ENCODE measurements at regions of chr1 and their contacts with region 1.

Region 1: DNA sequence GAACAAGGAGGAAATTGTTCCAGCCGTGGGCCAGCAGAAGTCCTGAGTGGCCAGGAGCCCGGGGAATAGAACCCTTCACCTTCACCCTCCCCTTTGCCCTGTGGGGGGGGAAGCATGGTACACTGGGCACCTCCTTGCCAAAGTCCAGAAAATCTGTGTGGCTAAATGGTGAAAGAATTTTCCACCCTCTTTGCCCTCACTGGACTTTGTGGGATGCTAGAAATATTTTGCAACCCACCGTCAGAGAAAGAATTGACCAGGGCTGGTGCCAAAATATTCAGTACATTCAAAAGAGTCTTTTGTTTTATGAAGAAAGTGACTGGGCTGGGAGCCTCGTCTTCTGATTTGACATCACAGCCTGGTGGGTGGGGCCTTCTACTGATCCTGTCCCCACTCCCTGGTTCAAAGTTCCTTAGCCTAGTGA is 14.6 kb downstream of the NFASC start:
- DNase-seq: no peak
- H3K4me3 ChIP-seq: peak overlapping the region in 1 of 2 donors; percentile 3
- H3K27ac ChIP-seq: peak overlapping the region; percentile 50
- H3K4me1 ChIP-seq: peaks cover 49% of the 10 kb centered on the region
- H3K27me3 ChIP-seq: no peaks in the 10 kb centered on the region
- CTCF ChIP-seq: no peak
- POLR2A ChIP-seq: no peak

Region 2: DNA sequence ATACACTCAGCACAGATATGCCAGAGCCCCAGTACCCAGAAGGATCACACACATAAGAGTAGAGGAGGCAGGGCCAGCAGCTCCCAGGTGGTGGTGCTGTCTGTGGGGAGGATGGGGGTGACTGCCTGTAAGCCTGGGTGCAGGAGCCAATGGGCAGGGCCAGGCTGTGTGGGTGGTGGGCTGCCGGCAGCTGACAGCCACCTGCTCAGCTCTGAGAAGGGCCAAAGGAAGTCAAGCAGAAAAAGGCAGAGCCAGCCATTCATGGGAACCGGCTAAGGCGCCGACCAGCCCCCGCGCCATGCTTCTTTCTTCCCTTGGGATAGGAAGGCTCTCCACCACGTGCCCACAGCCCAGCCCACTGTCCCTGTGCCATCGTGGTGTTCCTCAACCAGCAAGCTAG is 404.8 kb before region 1 on chr1:
- intact Hi-C with region 1: no loop called
- DNase-seq: no peak
- H3K4me3 ChIP-seq: no peak overlapping the region
- H3K27ac ChIP-seq: no peak overlapping the region
- H3K4me1 ChIP-seq: peaks cover 82% of the 10 kb centered on the region
- H3K27me3 ChIP-seq: no peaks in the 10 kb centered on the region
- CTCF ChIP-seq: no peak
- POLR2A ChIP-seq: no peak

Region 3: DNA sequence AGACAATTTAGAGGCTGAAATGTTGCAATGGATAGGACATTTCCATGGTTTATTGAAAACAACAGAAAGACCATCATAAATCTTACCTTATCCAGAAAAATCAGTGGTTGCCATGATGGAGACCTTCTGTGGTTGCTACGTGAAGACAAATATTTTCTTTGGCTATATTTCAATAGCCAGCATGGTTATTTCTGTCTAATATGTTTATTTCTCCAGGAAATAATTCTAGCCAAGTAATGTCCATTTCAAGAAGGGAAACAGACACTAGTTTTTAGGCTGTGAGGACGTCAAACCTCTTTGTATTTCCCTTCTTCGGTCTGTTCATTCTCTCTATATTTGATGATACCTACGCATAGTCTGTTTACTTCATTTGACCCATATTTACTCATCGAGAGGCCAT is 63.8 kb before region 1 on chr1:
- intact Hi-C with region 1: loop called (anchors 5 kb)
- DNase-seq: no peak
- H3K4me3 ChIP-seq: no peak overlapping the region
- H3K27ac ChIP-seq: peak overlapping the region; percentile 17
- H3K4me1 ChIP-seq: peaks cover 17% of the 10 kb centered on the region
- H3K27me3 ChIP-seq: no peaks in the 10 kb centered on the region
- CTCF ChIP-seq: no peak
- POLR2A ChIP-seq: no peak

Region 4: GRCh38 chr1:204927673-204928641 is 42.7 kb after region 1 on chr1:
- intact Hi-C with region 1: no loop called
- DNase-seq: peak in 1 of 2 donors; percentile 70
- H3K4me3 ChIP-seq: no peak overlapping the region
- H3K27ac ChIP-seq: no peak overlapping the region
- H3K4me1 ChIP-seq: no peaks in the 10 kb centered on the region
- H3K27me3 ChIP-seq: no peaks in the 10 kb centered on the region
- CTCF ChIP-seq: no peak
- POLR2A ChIP-seq: no peak

Region 5: DNA sequence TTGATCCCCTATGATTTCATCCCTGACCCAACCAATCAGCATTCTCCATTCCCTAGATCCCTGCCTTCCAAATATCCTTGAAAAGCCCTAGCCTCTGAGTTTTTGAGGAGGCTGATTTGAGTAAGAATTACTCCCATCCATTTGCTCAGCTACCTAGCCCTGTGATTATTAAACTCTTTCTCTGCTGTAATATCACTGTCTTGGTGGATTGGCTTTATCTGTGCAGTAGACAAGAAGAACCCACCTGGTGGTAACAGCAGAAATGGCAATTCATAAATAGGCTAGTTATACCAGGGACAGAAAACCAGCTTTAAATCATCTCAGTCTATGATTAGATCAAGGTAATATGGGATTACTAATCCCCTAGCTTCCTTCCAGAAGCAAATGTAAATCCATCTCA is 1993.2 kb after region 1 on chr1:
- intact Hi-C with region 1: no loop called
- DNase-seq: no peak
- H3K4me3 ChIP-seq: no peak overlapping the region
- H3K27ac ChIP-seq: no peak overlapping the region
- H3K4me1 ChIP-seq: no peaks in the 10 kb centered on the region
- H3K27me3 ChIP-seq: no peaks in the 10 kb centered on the region
- CTCF ChIP-seq: no peak
- POLR2A ChIP-seq: no peak